Activated T-helper 1 cell treated with anti-CD3 and anti-CD28 coated beads, Interleukin-12 subunit alpha, Interleukin-12 subunit beta, Interleukin-2, Interleukin-4 antibody, amounts not matched to agents 30 ng/mL and 10 ng/mL and 1 ng/mL, durations not matched to agents 14 hours and 24 hours and 36 hours (primary cell): ENCODE measurements at regions of chr7 and their contacts with region 1.

Region 1: GRCh38 chr7:35801392-35802101 is 690 bp downstream of the SEPTIN7 start:
- DNase-seq: peak; percentile 64
- H3K4me3 Mint-ChIP-seq: peak overlapping the region; percentile 98
- H3K27ac Mint-ChIP-seq: peak overlapping the region; percentile 95
- H3K4me1 Mint-ChIP-seq: peaks cover 47% of the 10 kb centered on the region
- H3K27me3 Mint-ChIP-seq: no peaks in the 10 kb centered on the region

Region 2: GRCh38 chr7:34341316-34341715 is 1460.2 kb before region 1 on chr7:
- intact Hi-C with region 1: no loop called
- DNase-seq: no peak
- H3K4me3 Mint-ChIP-seq: no peak overlapping the region
- H3K27ac Mint-ChIP-seq: no peak overlapping the region
- H3K4me1 Mint-ChIP-seq: no peaks in the 10 kb centered on the region
- H3K27me3 Mint-ChIP-seq: no peaks in the 10 kb centered on the region

Region 3: DNA sequence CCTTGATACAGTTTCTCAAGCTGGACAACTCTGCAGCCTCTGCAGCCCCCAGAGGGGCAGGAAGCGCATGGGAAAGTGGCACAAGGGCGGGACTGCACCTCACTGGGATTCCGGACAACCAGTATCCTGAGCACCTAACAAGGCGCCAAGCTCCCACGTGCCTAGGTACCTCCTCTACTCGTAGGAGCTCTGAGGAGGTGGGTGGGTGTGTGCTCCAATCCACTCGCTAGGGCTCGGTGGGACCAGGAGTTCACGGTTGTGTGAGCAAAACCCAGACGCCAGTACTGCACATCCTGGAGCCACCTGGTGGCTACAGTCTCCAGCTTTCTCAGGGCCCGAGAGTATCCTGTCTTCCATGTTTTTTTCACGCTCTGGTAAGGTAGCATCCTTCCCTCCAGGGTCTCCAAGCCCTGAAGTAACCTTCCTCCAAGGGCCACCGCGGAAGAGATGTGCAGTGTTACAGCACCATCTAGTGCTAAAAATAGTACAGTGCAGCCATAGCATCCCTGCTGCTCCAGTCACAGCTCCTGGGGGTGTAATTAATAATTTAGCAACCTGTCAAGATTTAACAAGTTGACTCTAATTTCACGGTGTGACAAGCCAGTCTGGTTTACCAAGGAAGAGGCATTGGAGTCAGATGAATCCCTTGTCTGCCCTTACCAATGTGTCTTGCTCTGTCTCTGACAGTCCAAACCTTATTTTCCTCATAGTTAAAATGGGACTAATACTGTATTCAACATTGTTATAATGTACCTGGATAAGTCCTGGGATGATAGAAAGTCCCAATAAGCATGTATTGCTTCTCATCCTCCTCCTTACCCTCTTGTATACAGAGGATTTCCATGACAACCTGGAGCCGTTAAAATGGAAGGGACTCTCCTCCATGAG is 177.0 kb before region 1 on chr7:
- intact Hi-C with region 1: loop called (anchors 1 kb)
- DNase-seq: peak; percentile 6
- H3K4me3 Mint-ChIP-seq: no peak overlapping the region
- H3K27ac Mint-ChIP-seq: no peak overlapping the region
- H3K4me1 Mint-ChIP-seq: no peaks in the 10 kb centered on the region
- H3K27me3 Mint-ChIP-seq: peaks cover 5% of the 10 kb centered on the region

Region 4: GRCh38 chr7:35729061-35729783 is 72.3 kb before region 1 on chr7:
- intact Hi-C with region 1: loop called (anchors 1 kb)
- DNase-seq: peak; percentile 19
- H3K4me3 Mint-ChIP-seq: peak overlapping the region; percentile 26
- H3K27ac Mint-ChIP-seq: peak overlapping the region; percentile 55
- H3K4me1 Mint-ChIP-seq: peaks cover 69% of the 10 kb centered on the region
- H3K27me3 Mint-ChIP-seq: peaks cover 6% of the 10 kb centered on the region

Region 5: DNA sequence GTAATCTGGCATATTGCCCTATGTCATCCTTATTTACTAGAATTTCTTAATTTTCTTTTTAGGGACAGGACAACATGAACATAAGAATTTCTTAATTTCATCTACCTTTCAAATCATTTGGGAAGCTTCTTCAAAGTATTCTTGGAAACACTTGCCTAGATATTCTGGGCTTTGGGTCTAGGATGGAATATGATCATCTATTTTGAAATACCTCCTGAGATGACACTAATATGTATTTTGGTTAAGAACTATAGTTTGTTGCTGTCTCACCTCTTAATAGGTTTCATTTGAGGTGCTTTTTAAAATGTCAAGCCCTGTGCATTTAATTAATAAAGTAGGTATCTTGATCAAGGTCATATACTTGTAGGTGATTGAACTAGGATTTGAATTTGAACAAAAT is 48.4 kb after region 1 on chr7:
- intact Hi-C with region 1: loop called (anchors 2 kb)
- DNase-seq: no peak
- H3K4me3 Mint-ChIP-seq: no peak overlapping the region
- H3K27ac Mint-ChIP-seq: no peak overlapping the region
- H3K4me1 Mint-ChIP-seq: peaks cover 11% of the 10 kb centered on the region
- H3K27me3 Mint-ChIP-seq: no peaks in the 10 kb centered on the region

Region 6: GRCh38 chr7:35906191-35906908 is 104.8 kb after region 1 on chr7:
- intact Hi-C with region 1: loop called (anchors 1 kb)
- DNase-seq: peak; percentile 43
- H3K4me3 Mint-ChIP-seq: no peak overlapping the region
- H3K27ac Mint-ChIP-seq: no peak overlapping the region
- H3K4me1 Mint-ChIP-seq: peaks cover 6% of the 10 kb centered on the region
- H3K27me3 Mint-ChIP-seq: no peaks in the 10 kb centered on the region

Region 7: DNA sequence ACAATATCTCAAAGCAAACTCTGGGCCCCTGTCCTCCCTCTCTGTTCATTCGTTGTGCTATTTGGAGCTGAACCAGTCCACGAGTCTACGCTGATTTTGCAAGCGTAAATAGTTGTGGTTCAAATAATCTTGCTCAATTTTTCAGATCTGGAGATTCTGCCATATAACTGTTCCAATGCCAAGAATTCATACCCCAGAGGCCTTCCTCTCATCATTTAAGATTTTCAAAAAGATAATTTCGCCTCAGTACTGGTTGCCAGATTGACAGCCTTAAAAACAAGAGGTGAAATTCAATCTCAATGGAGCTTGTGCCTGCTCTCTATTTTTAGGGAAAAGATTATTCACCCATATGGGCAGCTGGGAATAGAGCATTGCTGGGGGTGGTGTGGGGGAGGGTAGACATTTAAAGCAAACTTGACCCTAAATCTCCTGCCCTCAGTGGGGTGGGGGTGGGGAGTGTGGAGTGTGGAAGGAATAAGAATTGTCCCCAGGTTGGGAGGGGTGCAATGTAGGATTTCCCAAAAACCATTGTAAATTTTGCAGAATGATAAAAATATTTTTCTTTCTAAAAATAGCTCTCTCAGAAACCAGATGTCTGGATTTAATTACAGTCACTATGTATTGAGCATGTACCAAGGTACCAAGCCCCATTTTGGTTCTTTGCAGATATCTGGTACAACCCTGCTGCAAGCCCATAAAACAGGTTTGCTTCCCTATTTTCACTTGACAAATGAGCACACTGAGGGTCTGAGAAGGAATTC is 246.8 kb after region 1 on chr7:
- intact Hi-C with region 1: no loop called
- DNase-seq: no peak
- H3K4me3 Mint-ChIP-seq: no peak overlapping the region
- H3K27ac Mint-ChIP-seq: no peak overlapping the region
- H3K4me1 Mint-ChIP-seq: no peaks in the 10 kb centered on the region
- H3K27me3 Mint-ChIP-seq: peaks cover 5% of the 10 kb centered on the region

Region 8: GRCh38 chr7:36291387-36292316 is 490.1 kb after region 1 on chr7:
- intact Hi-C with region 1: loop called (anchors 5 kb)
- DNase-seq: peak; percentile 46
- H3K4me3 Mint-ChIP-seq: peak overlapping the region; percentile 31
- H3K27ac Mint-ChIP-seq: no peak overlapping the region
- H3K4me1 Mint-ChIP-seq: peaks cover 41% of the 10 kb centered on the region
- H3K27me3 Mint-ChIP-seq: no peaks in the 10 kb centered on the region

Region 9: GRCh38 chr7:36686499-36686898 is 885.0 kb after region 1 on chr7:
- intact Hi-C with region 1: loop called (anchors 10 kb)
- DNase-seq: no peak
- H3K4me3 Mint-ChIP-seq: peak overlapping the region; percentile 69
- H3K27ac Mint-ChIP-seq: peak overlapping the region; percentile 91
- H3K4me1 Mint-ChIP-seq: peaks cover 78% of the 10 kb centered on the region
- H3K27me3 Mint-ChIP-seq: no peaks in the 10 kb centered on the region